HepG2 (cell line): ENCODE measurements at regions of chr7 and their contacts with region 1.

Region 1: DNA sequence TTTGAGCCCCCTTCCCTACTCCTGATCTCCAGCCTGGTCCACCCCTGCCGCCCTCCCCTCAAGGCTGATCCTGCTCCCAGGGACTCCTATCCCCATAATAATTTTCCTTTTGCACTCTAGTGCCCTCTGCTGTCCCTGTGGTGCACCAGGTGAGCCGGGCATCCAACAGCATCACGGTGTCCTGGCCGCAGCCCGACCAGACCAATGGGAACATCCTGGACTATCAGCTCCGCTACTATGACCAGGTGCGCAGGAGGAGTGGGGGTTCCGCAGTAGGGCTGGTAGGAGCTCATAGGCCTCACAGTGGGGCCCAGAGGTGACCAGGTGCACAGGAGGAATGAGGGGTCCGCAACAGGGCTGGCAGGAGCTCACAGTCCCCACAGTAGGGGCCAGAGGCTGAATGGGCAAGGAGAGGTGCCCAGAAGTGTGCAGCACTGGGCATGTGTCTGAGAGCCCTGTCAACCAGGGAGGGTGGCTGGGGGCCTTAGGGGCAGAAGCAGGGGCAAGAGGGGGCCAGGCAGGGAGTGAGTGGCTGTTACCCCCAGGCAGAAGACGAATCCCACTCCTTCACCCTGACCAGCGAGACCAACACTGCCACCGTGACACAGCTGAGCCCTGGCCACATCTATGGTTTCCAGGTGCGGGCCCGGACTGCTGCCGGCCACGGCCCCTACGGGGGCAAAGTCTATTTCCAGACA is 11.6 kb downstream of the EPHB6 start:
- DNase-seq: peak; percentile 13
- ATAC-seq: peak; percentile 89
- H3K4me3 ChIP-seq: no peak overlapping the region
- H3K27ac ChIP-seq: no peak overlapping the region
- H3K4me1 ChIP-seq: no peaks in the 10 kb centered on the region
- H3K27me3 ChIP-seq: peaks cover 8 to 52% of the 10 kb centered on the region in 2 experiments; a peak in 4 of 5 replicates
- CTCF ChIP-seq: peak; percentile 75
- EP300 ChIP-seq: no peak
- POLR2A ChIP-seq: no peak
- RAD21 ChIP-seq: no peak

Region 2: GRCh38 chr7:142632291-142633134 is 234.0 kb before region 1 on chr7:
- CTCF ChIA-PET with region 1: no interaction called
- POLR2A ChIA-PET with region 1: no interaction called
- in situ Hi-C with region 1: no loop called
- intact Hi-C with region 1: loop called (anchors 2 kb)
- DNase-seq: peak; percentile 32
- ATAC-seq: peak; percentile 96
- H3K4me3 ChIP-seq: no peak overlapping the region
- H3K27ac ChIP-seq: no peak overlapping the region
- H3K4me1 ChIP-seq: no peaks in the 10 kb centered on the region
- H3K27me3 ChIP-seq: peaks cover 0 to 22% of the 10 kb centered on the region in 2 experiments; a peak in 2 of 5 replicates
- CTCF ChIP-seq: peak; percentile 74
- EP300 ChIP-seq: no peak
- POLR2A ChIP-seq: no peak
- RAD21 ChIP-seq: peak; percentile 50; the same call in 1 of the 2 replicates

Region 3: DNA sequence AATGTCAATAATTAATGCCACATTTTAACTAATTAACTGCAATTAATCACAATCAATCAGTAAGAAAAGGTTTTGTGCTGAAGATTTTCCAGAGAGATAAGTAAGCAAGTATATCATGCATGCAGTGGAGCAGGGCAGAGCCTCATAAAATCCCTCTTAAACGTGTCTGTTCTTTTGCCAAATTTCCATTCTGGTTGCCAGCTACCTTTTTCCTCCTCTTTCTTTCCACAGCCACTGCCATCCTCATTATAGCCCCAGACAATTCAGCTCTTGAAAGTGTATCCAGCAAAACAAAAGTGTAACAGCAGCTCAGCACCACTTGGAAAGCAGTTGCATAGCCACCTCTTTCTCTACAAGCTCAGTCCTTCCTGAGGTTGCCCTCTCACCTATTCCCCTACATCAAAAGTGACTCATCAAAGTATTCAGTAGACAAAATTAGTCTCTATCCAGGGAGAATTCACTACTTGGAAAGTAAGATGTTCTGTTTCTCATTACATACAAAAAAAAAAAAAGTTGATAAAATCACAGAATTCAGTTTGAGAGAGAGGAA is 38.5 kb before region 1 on chr7:
- CTCF ChIA-PET with region 1: no interaction called
- POLR2A ChIA-PET with region 1: no interaction called
- in situ Hi-C with region 1: no loop called
- intact Hi-C with region 1: no loop called
- DNase-seq: no peak
- ATAC-seq: no peak
- H3K4me3 ChIP-seq: no peak overlapping the region
- H3K27ac ChIP-seq: no peak overlapping the region
- H3K4me1 ChIP-seq: no peaks in the 10 kb centered on the region
- H3K27me3 ChIP-seq: no peaks in the 10 kb centered on the region
- CTCF ChIP-seq: no peak
- EP300 ChIP-seq: no peak
- POLR2A ChIP-seq: no peak
- RAD21 ChIP-seq: no peak

Region 4: GRCh38 chr7:142853739-142854371 is 12.7 kb before region 1 on chr7:
- CTCF ChIA-PET with region 1: interaction called, 18 read pairs
- POLR2A ChIA-PET with region 1: no interaction called
- in situ Hi-C with region 1: no loop called
- intact Hi-C with region 1: loop called (anchors 1 kb)
- DNase-seq: peak; percentile 33
- ATAC-seq: peak; percentile 87
- H3K4me3 ChIP-seq: peak overlapping the region; percentile 44 to 77 (median 70)
- H3K27ac ChIP-seq: no peak overlapping the region
- H3K4me1 ChIP-seq: no peaks in the 10 kb centered on the region
- H3K27me3 ChIP-seq: peaks cover 1 to 29% of the 10 kb centered on the region in 2 experiments; a peak in 3 of 5 replicates
- CTCF ChIP-seq: peak; percentile 77
- EP300 ChIP-seq: no peak
- POLR2A ChIP-seq: no peak
- RAD21 ChIP-seq: peak; percentile 45; the same call in 1 of the 2 replicates